ENCODE measurements at regions of chr2 and their contacts with region 1.

Region 1: GRCh38 chr2:64330281-64331113 is 123.5 kb upstream of the LGALSL start:
- DNase-seq: peak; percentile 92
- H3K4me3 Mint-ChIP-seq: peak overlapping the region; percentile 50
- H3K27ac Mint-ChIP-seq: peak overlapping the region; percentile 80
- H3K4me1 Mint-ChIP-seq: peaks cover 58% of the 10 kb centered on the region
- H3K27me3 Mint-ChIP-seq: peaks cover 2% of the 10 kb centered on the region

Region 2: DNA sequence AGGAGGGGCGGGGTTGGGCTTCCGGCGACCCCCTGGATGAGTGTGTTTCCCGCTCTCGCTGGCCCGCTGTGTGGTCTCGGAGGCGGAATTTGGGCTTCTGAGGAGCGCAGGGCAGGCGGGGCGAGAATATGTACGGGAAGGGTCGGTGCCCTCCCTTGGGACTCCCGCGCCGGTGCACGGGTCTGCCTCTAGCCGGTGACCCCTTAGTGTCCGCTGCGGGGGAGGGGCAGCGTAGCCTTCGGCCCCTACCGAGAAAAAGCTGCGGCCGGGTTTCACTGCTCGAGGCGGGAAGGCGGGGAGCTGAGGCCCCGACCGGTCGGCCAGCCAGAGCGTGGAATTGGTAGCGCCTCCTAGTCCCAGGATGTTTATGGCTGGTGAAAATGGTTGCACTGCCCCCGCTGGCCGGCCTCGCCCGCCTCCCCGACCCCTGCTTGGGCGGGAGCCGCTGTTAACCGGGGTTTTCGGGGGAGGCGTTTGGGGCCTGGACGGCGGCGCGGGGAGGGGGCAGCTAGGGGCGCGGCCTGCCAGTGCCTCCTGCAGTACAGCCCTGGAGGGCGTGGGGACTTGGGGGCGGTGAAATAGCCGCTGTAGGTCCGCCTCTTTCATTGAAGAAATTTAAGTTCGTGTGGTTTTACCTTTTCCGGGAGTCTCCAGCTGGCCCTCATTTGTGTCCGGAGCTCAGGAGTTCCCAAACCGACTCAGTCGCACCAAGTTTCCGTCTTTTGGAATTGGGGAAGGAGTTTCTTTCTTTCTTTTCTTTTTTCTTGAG is 489.1 kb before region 1 on chr2 and contains the start of gene UGP2:
- intact Hi-C with region 1: loop called (anchors 5 kb)
- DNase-seq: peak; percentile 96
- H3K4me3 Mint-ChIP-seq: peak within 1 kb of the TSS; percentile 96
- H3K27ac Mint-ChIP-seq: peak within 1 kb of the TSS; percentile 100
- H3K4me1 Mint-ChIP-seq: peaks cover 48% of the 10 kb centered on the region
- H3K27me3 Mint-ChIP-seq: peaks cover 3% of the 10 kb centered on the region
- total RNA-seq, gene UGP2: 66.3 and 66.5 TPM in 2 replicates

Region 3: DNA sequence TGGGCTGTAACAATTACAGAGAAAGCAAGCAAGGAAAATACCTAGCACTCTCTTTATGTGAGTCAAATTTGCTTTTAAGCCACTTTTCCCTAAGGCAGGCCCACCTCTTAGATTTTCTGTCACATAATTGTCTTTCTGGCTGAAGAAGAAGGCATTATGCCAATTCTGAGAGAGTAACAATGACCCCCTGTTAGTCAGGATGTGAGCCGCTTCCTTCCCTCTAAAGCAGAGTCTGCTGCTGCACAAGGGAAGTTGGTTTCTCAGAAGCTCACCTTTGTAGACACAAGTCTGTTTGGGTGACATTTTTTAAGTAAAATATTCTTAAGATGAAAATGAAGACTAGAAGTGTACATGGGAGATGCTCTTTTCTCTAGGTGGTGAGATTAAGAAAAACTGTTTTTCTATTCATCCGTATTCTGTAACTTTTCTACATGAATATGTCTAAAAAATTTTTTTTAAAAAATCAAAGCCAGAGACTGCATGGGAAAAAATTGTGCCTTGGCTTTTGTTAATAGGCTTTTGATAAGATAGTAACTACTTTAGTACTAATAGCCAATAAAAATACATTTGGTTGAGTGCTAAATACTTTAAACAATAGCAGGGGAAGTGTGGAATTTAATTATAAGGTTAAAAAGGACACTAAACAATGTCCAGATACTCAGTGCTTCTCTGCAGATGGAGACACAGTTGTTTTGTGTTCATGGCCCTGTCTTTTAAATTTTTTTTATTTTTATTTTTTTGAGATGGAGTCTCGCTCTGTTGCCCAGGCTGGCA is 277.8 kb before region 1 on chr2:
- intact Hi-C with region 1: loop called (anchors 1 kb)
- DNase-seq: peak; percentile 70
- H3K4me3 Mint-ChIP-seq: no peak overlapping the region
- H3K27ac Mint-ChIP-seq: no peak overlapping the region
- H3K4me1 Mint-ChIP-seq: peaks cover 36% of the 10 kb centered on the region
- H3K27me3 Mint-ChIP-seq: no peaks in the 10 kb centered on the region

Region 4: DNA sequence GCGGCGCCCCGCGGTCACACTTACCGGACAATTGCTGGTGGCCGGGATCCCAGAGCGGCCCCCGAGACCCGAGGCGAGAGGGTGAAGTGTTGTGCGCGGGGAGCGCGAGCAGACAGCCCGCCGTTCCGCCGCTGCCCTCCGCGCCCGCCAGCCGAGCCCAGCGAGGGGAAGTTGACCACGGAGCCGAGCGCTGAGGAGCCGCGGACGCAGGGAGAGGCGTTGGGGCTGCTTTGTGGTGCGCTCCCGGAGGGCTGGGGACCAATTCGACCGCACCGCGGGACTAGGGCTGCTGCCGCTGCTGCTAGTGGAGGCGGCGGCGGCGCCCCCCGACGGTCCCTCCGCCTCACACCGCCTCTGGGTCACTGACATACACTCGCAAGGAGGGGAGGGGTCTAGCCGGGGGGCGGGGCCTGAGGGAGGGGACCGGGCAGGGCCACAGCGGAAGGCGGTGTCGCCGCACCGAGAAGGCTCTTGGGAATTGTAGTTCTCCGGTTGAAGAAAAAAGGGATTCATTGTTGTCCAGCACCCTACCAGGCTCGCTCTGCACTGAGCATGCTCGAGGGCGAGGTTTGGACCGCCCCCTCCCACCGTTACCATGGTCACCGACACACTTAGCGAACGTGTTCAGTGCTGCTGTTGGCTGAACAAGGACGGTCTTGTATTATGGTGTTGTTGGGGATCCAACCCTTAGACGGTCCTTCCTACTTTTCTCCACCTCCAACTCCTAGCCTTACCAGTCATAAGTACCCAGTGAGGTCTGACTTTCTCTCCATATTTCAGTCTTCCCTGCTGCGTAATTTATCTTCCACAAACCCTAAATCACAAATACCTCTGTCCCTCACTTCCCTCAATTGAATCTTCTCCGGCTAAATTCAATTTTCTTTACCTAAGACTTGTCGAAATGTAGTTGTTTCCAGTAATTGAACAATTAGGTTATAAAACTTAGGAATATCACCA is 186.2 kb before region 1 on chr2 and contains the start of gene PELI1:
- intact Hi-C with region 1: loop called (anchors 1 kb)
- DNase-seq: peak; percentile 97
- H3K4me3 Mint-ChIP-seq: peak within 1 kb of the TSS; percentile 99
- H3K27ac Mint-ChIP-seq: peak within 1 kb of the TSS; percentile 96
- H3K4me1 Mint-ChIP-seq: peaks cover 19% of the 10 kb centered on the region
- H3K27me3 Mint-ChIP-seq: no peaks in the 10 kb centered on the region
- total RNA-seq, gene PELI1: 31.9 and 33.8 TPM in 2 replicates

Region 5: GRCh38 chr2:64214281-64215115 is 116.0 kb before region 1 on chr2:
- intact Hi-C with region 1: loop called (anchors 1 kb)
- DNase-seq: peak; percentile 80
- H3K4me3 Mint-ChIP-seq: peak overlapping the region; percentile 74
- H3K27ac Mint-ChIP-seq: peak overlapping the region; percentile 97
- H3K4me1 Mint-ChIP-seq: peaks cover 41% of the 10 kb centered on the region
- H3K27me3 Mint-ChIP-seq: no peaks in the 10 kb centered on the region

Region 6: GRCh38 chr2:64562148-64562784 is 231.8 kb after region 1 on chr2:
- intact Hi-C with region 1: loop called (anchors 2 kb)
- DNase-seq: no peak
- H3K4me3 Mint-ChIP-seq: no peak overlapping the region
- H3K27ac Mint-ChIP-seq: no peak overlapping the region
- H3K4me1 Mint-ChIP-seq: peaks cover 30% of the 10 kb centered on the region
- H3K27me3 Mint-ChIP-seq: no peaks in the 10 kb centered on the region

Measured in activated CD4-positive, alpha-beta T cell treated with anti-CD3 and anti-CD28 coated beads, Interleukin-2, amount 10 ng/mL, durations not matched to agents 24 days and 14 days (primary cell).